ENCODE measurements at regions of chr5 and their contacts with region 1.

Region 1: GRCh38 chr5:75668977-75669689 is 48.1 kb downstream of the POC5 start:
- DNase-seq: peak; percentile 36
- ATAC-seq: peak; percentile 82

Region 2: GRCh38 chr5:75509956-75510355 is 159.2 kb before region 1 on chr5:
- intact Hi-C with region 1: loop called (anchors 10 kb)
- DNase-seq: no peak
- ATAC-seq: no peak

Region 3: DNA sequence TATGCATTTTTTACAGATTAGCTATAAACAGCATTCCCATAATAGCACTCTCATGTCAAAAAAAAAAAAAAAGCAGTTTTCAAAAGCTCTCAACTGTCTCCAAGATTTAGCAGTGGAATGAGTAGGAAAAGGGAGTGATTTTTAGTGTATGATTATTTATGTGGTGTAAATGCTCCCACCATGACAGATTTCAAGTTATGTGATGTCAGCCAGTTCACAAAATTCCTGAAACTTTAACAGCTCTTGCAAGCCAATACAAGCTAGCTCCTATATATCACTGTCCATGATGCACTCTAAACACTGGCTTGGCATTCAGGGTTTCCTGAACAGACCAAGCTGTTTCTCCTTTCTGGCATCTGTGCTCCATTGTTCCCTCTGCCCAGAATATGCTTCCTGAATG is 65.8 kb before region 1 on chr5:
- intact Hi-C with region 1: no loop called
- DNase-seq: no peak
- ATAC-seq: no peak

Region 4: GRCh38 chr5:75948438-75948837 is 279.3 kb after region 1 on chr5:
- intact Hi-C with region 1: no loop called
- DNase-seq: no peak
- ATAC-seq: no peak